ENCODE measurements at regions of chr3 and their contacts with region 1.

Region 1: DNA sequence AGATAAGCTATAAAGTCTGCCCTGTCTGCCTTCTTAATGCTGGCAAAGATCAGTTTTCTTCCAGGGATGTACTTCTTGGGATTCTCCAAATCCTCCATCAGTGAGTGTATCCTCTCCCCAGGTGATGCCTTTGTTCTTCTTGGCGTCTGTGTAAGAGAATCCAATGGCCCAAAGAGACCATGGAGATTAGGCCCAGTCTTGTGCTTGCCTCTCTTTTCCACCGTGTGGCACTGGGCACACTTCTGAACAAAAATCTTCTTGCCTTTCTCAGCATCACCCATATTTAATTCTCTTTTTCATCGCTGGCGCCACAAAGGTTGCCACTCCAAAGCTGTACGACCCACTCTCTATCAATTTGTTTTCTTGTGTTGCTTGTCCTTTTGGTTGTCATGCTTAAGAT is 32.2 kb upstream of the TAMM41 start:
- DNase-seq: no peak
- ATAC-seq: no peak
- H3K4me3 ChIP-seq: no peak overlapping the region
- H3K27ac ChIP-seq: no peak overlapping the region
- H3K4me1 ChIP-seq: no peaks in the 10 kb centered on the region
- H3K27me3 ChIP-seq: no peaks in the 10 kb centered on the region
- CTCF ChIP-seq: no peak
- EP300 ChIP-seq: no peak
- POLR2A ChIP-seq: no peak
- RAD21 ChIP-seq: no peak

Region 2: GRCh38 chr3:9994086-9994844 is 1884.6 kb before region 1 on chr3:
- CTCF ChIA-PET with region 1: no interaction called
- POLR2A ChIA-PET with region 1: no interaction called
- RAD21 ChIA-PET with region 1: no interaction called
- SMC1A ChIA-PET with region 1: no interaction called
- in situ Hi-C with region 1: loop called (anchors 10 kb)
- intact Hi-C with region 1: no loop called
- DNase-seq: no peak
- ATAC-seq: no peak
- H3K4me3 ChIP-seq: no peak overlapping the region
- H3K27ac ChIP-seq: no peak overlapping the region
- H3K4me1 ChIP-seq: no peaks in the 10 kb centered on the region
- H3K27me3 ChIP-seq: no peaks in the 10 kb centered on the region
- CTCF ChIP-seq: no peak
- EP300 ChIP-seq: no peak
- POLR2A ChIP-seq: no peak
- RAD21 ChIP-seq: no peak

Region 3: GRCh38 chr3:10047876-10048275 is 1831.0 kb before region 1 on chr3:
- CTCF ChIA-PET with region 1: no interaction called
- POLR2A ChIA-PET with region 1: no interaction called
- RAD21 ChIA-PET with region 1: no interaction called
- SMC1A ChIA-PET with region 1: no interaction called
- in situ Hi-C with region 1: loop called (anchors 5 kb)
- intact Hi-C with region 1: no loop called
- DNase-seq: no peak
- ATAC-seq: no peak
- H3K4me3 ChIP-seq: no peak overlapping the region
- H3K27ac ChIP-seq: no peak overlapping the region
- H3K4me1 ChIP-seq: no peaks in the 10 kb centered on the region
- H3K27me3 ChIP-seq: no peaks in the 10 kb centered on the region
- CTCF ChIP-seq: no peak
- EP300 ChIP-seq: no peak
- POLR2A ChIP-seq: no peak
- RAD21 ChIP-seq: no peak

Region 4: DNA sequence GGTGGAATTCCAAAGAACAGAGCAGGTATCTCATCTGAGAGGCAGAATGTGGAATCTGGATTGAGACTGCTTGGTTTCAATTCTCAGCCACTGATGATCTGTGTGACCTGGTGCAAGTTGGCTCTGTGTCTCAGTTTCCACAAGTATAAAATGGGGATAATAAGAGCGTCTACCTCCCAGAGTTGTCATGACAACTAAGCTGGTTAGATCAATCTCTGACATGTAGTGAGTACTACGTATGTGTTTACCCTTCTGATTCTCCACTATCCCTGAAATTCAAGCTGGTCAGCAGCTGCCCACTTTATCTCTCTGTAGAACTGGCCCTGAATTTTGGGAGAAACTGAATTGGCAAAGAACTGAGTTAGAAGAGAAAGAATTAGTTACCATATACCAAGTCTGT is 26.4 kb before region 1 on chr3:
- CTCF ChIA-PET with region 1: no interaction called
- POLR2A ChIA-PET with region 1: no interaction called
- RAD21 ChIA-PET with region 1: no interaction called
- SMC1A ChIA-PET with region 1: no interaction called
- in situ Hi-C with region 1: no loop called
- intact Hi-C with region 1: no loop called
- DNase-seq: no peak
- ATAC-seq: no peak
- H3K4me3 ChIP-seq: no peak overlapping the region
- H3K27ac ChIP-seq: no peak overlapping the region
- H3K4me1 ChIP-seq: no peaks in the 10 kb centered on the region
- H3K27me3 ChIP-seq: no peaks in the 10 kb centered on the region; a peak in 1 of 4 replicates
- CTCF ChIP-seq: no peak
- EP300 ChIP-seq: no peak
- POLR2A ChIP-seq: no peak
- RAD21 ChIP-seq: no peak

Region 5: DNA sequence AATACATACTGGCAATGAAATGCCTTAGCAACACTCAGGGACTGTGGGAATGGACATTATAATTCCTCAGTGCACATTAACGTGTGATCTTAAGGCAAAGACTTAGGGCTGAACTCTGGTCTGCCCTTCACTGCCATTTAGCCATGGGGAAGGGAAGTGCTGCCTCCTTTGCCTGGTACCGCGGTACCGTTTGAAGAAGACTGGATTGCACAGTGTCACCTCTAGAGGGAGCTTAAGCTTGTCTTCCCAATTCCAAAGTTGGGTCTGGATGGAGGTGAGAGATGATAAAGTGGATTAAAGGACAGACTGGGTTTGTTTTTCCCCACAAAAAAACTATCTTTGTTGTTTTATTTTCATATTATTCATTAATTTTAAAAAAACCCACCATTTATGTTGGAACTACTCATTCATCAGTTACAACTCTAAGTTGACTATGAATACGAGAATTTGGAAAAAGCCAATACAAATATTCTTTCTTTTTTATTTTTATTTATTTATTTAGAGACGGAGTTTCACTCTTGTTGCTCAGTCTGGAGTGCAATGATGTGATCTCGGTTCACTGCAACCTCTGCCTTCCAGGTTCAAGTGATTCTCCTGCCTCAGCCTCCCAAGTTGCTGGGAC is 65.3 kb after region 1 on chr3:
- CTCF ChIA-PET with region 1: no interaction called
- POLR2A ChIA-PET with region 1: no interaction called
- RAD21 ChIA-PET with region 1: no interaction called
- SMC1A ChIA-PET with region 1: no interaction called
- in situ Hi-C with region 1: no loop called
- intact Hi-C with region 1: no loop called
- DNase-seq: no peak
- ATAC-seq: no peak
- H3K4me3 ChIP-seq: no peak overlapping the region
- H3K27ac ChIP-seq: no peak overlapping the region
- H3K4me1 ChIP-seq: no peaks in the 10 kb centered on the region
- H3K27me3 ChIP-seq: no peaks in the 10 kb centered on the region
- CTCF ChIP-seq: 0 out of 6 replicates have a peak, but pooled peaks of 2 of the 3 experiments have one; percentile 11 to 13
- EP300 ChIP-seq: no peak
- POLR2A ChIP-seq: no peak
- RAD21 ChIP-seq: no peak

Region 6: DNA sequence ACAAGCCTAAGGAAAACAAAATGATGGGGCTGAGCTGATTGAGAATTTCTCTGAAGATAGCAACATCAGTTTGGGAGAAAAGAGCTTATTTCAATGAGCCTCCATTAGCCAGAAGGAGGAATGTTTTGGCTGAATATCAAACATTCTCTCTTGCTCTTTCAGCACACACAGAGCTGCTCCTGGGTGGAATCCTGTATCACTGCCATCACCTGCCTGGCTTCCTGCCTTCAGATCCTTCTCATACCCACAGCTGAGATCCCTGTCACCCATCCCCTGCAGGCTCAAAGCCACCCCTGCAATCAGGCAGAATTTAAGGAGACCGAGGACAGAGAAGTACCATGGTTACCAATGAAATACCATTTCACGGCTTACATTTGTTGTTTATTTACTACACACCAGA is 98.1 kb after region 1 on chr3:
- CTCF ChIA-PET with region 1: no interaction called
- POLR2A ChIA-PET with region 1: no interaction called
- RAD21 ChIA-PET with region 1: no interaction called
- SMC1A ChIA-PET with region 1: no interaction called
- in situ Hi-C with region 1: no loop called
- intact Hi-C with region 1: no loop called
- DNase-seq: no peak
- ATAC-seq: no peak
- H3K4me3 ChIP-seq: no peak overlapping the region
- H3K27ac ChIP-seq: no peak overlapping the region
- H3K4me1 ChIP-seq: no peaks in the 10 kb centered on the region
- H3K27me3 ChIP-seq: peaks cover 1 to 2% of the 10 kb centered on the region in 2 experiments; a peak in 1 of 4 replicates
- CTCF ChIP-seq: no peak
- EP300 ChIP-seq: no peak
- POLR2A ChIP-seq: no peak
- RAD21 ChIP-seq: no peak